Gastrocnemius medialis (tissue), 4 donors: ENCODE measurements at regions of chr11 and their contacts with region 1.

Region 1: DNA sequence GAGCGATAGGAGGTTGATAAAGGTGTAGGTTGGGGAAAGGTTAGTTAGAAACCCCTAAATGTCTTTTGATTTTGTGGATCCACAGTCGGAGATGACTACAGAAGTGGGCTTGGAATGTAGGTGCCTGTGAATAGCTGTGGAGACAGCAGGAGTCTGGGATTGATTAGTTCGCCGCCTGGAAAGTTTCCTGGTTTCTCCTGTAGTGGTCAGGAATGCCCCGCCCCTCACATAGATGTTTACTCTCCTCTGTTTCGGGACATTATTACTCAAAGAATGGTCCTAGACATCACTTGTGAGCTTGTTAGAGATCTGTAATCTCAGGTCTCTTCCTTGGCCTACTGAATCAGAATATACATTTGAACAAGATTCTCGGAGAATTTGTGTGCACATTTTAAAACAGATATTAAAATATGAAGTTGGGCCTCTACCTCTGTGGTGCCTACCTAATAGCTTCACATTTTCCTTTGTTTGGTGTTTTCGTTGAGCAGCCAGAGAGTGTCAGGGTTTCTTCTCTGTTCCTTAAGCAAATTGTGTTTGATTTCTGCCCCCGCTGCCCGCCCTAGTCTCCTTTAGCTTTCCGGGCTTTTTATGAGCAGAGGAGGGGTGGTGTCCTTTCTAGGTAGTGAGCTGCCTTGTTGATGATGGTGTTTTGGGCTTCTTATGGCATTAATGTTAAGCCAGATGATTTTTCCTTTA is 89.4 kb downstream of the PPP6R3 start:
- DNase-seq: no peak
- ATAC-seq: no peak
- H3K4me3 ChIP-seq: no peak overlapping the region
- H3K27ac ChIP-seq: peak overlapping the region; percentile 53 to 86 (median 84)
- H3K4me1 ChIP-seq: peaks cover 52 to 55% of the 10 kb centered on the region in 2 donors
- H3K27me3 ChIP-seq: no peaks in the 10 kb centered on the region
- CTCF ChIP-seq: no peak
- POLR2A ChIP-seq: no peak

Region 2: DNA sequence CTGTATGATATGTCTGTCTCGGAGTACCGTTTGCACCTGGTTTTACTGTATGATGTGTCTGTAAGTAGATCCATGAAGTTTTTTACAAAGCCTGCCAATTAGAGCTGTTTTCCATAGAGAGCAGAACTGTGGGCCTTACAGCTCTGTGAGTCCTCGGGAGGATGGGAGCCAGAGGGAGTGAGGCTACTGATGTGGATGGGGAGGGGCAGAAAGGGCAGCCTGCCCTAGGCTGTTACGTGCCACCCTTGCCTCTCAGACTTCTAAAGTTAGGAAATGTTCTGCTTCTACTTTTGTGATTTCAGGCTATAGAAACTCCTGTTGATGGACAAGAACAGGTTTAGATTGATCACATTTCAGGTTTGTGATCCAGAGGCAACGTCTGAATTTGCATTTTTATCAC is 15.8 kb after region 1 on chr11:
- in situ Hi-C with region 1: no loop called
- intact Hi-C with region 1: loop called (anchors 2 kb)
- DNase-seq: peak; percentile 47 to 63
- ATAC-seq: peak; percentile 82 to 86
- H3K4me3 ChIP-seq: no peak overlapping the region
- H3K27ac ChIP-seq: peak overlapping the region; percentile 58 to 78 (median 68)
- H3K4me1 ChIP-seq: peaks cover 24 to 34% of the 10 kb centered on the region in 2 donors
- H3K27me3 ChIP-seq: no peaks in the 10 kb centered on the region
- CTCF ChIP-seq: no peak
- POLR2A ChIP-seq: no peak